ENCODE measurements at regions of chr5 and their contacts with region 1.

Region 1: DNA sequence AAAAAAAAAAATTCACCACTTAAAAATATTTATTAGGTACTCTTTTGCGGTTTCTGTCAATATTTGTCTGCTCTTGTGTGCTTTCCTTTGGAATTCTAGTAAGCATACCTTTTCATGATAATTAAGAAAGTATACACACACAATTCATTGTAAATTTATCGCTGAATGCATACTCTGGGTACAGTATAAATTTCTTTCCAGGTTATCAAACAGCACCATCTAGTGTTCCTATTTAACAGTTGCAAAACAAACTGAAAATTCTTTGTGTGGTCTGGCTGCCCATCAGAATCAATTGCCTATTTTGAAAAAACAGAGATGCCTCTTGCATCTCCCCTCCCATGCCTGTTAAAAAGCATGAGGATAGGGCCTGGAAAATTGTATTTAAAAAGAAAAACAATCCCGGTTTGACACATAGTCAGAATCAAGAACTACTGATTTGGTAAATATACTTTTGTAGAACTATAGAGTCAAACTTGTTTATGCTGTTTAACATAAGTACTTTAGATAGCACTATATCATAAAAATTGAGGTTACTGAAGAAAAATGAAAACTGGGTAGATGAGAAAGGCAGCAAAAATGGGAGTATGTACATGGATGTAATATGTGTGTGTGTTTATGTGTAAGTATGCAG is 16.2 kb downstream of the PGGT1B start:
- DNase-seq: no peak
- ATAC-seq: peak; percentile 53
- H3K4me3 ChIP-seq: no peak overlapping the region
- H3K27ac ChIP-seq: no peak overlapping the region
- H3K4me1 ChIP-seq: peaks cover 25% of the 10 kb centered on the region
- H3K27me3 ChIP-seq: no peaks in the 10 kb centered on the region
- CTCF ChIP-seq: peak; percentile 58 to 82 (median 77)
- POLR2A ChIP-seq: no peak

Region 2: DNA sequence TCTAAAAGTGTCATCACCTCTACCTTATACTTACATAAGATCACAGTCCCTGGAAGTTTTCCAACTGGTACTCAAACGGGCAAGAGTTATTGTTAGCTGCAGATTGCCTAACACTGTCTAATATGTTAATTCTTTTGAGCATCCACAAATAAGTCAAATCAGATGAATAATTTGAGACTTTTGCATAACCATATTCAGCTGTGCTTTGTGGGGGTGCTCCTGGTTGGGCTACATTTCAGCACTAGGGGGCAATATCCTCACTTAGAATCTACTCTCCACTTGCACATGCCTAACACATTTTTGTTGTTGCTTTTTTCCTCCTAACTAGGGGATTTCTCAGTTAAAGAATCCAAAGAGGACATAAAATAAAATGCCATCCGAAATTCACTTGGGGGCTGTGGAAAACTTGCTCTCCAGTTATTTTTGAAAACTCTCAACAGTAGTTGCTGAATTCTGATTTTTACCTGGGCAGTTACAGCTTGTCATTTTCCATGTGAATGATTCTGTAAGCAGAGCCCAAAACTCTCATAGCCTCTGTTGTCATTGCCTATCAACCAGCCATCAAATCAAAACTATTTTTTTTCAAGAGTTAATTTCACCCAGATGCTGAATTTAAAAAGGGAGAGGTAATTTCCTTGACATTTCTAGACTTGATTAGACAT is 148.3 kb before region 1 on chr5:
- intact Hi-C with region 1: loop called (anchors 10 kb)
- DNase-seq: peak; percentile 19 to 56 (median 47)
- ATAC-seq: peak; percentile 59
- H3K4me3 ChIP-seq: no peak overlapping the region
- H3K27ac ChIP-seq: no peak overlapping the region
- H3K4me1 ChIP-seq: no peaks in the 10 kb centered on the region
- H3K27me3 ChIP-seq: no peaks in the 10 kb centered on the region
- CTCF ChIP-seq: peak; percentile 55 to 83 (median 74)
- POLR2A ChIP-seq: no peak

Measured in body of pancreas (tissue), 4 donors.